PC-3 (cell line): ENCODE measurements at regions of chr3 and their contacts with region 1.

Region 1: GRCh38 chr3:98039322-98040024 is 4.4 kb upstream of the GABRR3 start:
- DNase-seq: peak; percentile 89
- ATAC-seq: peak; percentile 89
- H3K4me3 ChIP-seq: peak overlapping the region; percentile 61
- H3K27ac ChIP-seq: no peak overlapping the region
- H3K4me1 ChIP-seq: no peaks in the 10 kb centered on the region
- H3K27me3 ChIP-seq: peaks cover 16% of the 10 kb centered on the region
- CTCF ChIP-seq: peak; percentile 98

Region 2: DNA sequence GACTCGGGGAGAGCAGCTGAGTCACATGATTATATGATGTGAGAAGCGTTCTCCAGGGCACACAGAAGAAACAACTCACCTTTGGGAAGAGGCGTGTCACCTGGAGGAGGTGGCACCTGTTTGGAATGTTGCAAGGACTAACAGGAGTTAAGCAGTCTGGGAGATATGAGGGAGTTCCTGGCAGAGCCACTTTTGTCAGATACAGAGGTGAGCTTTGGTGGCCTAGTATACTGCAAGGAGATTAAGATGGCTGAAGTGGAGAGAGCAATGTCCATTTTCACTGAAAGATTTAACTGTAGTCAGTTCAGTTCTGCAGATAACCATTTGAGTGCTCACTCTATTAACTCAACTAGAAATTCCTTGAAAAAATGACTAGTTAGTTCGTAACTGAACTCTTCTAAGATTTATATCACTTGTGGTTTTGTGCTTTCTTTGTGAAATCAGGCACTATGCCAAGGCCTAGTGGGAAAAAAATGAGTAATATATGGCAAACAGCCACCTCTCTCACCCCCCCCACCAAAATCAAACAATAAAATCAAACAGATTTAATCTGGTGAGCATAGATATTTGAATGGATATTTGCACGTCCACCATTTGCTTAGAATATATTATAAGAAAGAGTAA is 156.4 kb before region 1 on chr3:
- CTCF ChIA-PET with region 1: no interaction called
- POLR2A ChIA-PET with region 1: no interaction called
- intact Hi-C with region 1: no loop called
- DNase-seq: peak; percentile 92
- ATAC-seq: peak; percentile 92
- H3K4me3 ChIP-seq: peak overlapping the region; percentile 54
- H3K27ac ChIP-seq: peak overlapping the region; percentile 90
- H3K4me1 ChIP-seq: peaks cover 26% of the 10 kb centered on the region
- H3K27me3 ChIP-seq: no peaks in the 10 kb centered on the region
- CTCF ChIP-seq: no peak

Region 3: GRCh38 chr3:97971677-97972567 is 67.6 kb before region 1 on chr3 and contains the start of gene RIOX2:
- CTCF ChIA-PET with region 1: no interaction called
- POLR2A ChIA-PET with region 1: no interaction called
- intact Hi-C with region 1: no loop called
- DNase-seq: peak; percentile 82
- ATAC-seq: peak; percentile 88
- H3K4me3 ChIP-seq: peak within 1 kb of the TSS; percentile 75
- H3K27ac ChIP-seq: peak within 1 kb of the TSS; percentile 40
- H3K4me1 ChIP-seq: peaks cover 22% of the 10 kb centered on the region
- H3K27me3 ChIP-seq: no peaks in the 10 kb centered on the region
- CTCF ChIP-seq: no peak
- total RNA-seq, gene RIOX2: 31.0 and 46.4 TPM in 2 replicates

Region 4: DNA sequence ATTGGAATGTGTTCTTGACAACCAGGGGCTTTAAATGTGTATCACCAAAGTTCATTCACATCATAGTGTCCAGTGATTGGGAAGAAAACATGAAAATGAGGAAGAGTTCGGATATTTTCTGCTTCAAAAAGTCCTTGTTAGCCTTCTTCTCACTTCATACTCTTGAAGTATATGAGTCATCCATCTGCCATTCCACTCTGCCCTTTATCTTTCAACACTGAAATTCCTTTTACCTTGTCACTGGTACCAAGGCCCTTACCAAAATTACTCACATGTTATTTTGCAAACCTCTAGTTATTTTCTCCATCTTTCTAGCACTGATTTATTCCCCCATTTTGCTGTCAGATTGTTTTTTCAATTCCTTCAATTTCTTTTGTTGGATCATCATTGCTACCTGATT is 159.5 kb after region 1 on chr3:
- CTCF ChIA-PET with region 1: no interaction called
- POLR2A ChIA-PET with region 1: no interaction called
- intact Hi-C with region 1: no loop called
- DNase-seq: peak; percentile 7
- ATAC-seq: no peak
- H3K4me3 ChIP-seq: no peak overlapping the region
- H3K27ac ChIP-seq: no peak overlapping the region
- H3K4me1 ChIP-seq: no peaks in the 10 kb centered on the region
- H3K27me3 ChIP-seq: peaks cover 16% of the 10 kb centered on the region
- CTCF ChIP-seq: no peak

Region 5: DNA sequence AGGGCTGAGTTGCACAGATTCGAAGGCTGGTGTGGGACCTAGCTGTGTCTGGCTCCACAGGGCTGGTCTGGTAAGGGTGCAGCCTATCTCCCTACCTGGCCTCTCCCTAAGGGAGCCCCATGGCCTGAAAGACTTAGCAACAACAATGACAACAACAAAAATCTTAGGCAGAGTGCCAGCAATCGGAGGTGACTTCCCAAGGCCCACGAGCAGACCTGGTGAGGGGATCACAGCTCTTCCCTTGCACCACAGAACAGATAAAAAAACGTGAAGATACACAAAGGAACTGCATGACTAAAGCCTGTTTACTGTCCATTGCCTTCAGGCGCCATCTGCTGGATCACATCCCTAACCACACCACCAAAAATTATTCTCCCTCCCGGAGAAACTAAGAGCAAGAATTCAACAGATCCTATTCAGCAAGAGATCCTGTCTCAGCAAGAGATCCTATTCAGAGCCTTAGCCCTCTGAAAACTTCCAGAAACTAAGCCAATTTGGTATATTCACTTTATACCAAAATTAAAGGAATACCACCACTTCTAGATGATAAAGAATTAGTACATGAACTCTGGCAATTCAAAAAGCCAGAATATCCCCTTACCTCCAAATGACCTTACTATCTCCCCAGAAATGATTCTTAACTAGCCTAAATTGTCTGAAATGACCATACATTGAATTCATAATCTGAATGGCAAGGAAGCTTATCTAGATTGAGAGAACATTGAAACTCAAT is 290.1 kb after region 1 on chr3:
- CTCF ChIA-PET with region 1: interaction called, 4 read pairs
- POLR2A ChIA-PET with region 1: no interaction called
- intact Hi-C with region 1: loop called (anchors 1 kb)
- DNase-seq: peak; percentile 73
- ATAC-seq: peak; percentile 78
- H3K4me3 ChIP-seq: no peak overlapping the region
- H3K27ac ChIP-seq: no peak overlapping the region
- H3K4me1 ChIP-seq: 0 out of 2 replicates have a peak, but pooled peaks cover 4% of the 10 kb centered on the region
- H3K27me3 ChIP-seq: peaks cover 42% of the 10 kb centered on the region
- CTCF ChIP-seq: peak; percentile 87

Region 6: GRCh38 chr3:98522244-98523090 is 483.0 kb after region 1 on chr3 and contains the start of gene CLDND1:
- CTCF ChIA-PET with region 1: no interaction called
- POLR2A ChIA-PET with region 1: no interaction called
- intact Hi-C with region 1: loop called (anchors 2 kb)
- DNase-seq: peak; percentile 99
- ATAC-seq: peak; percentile 95
- H3K4me3 ChIP-seq: peak within 1 kb of the TSS; percentile 79
- H3K27ac ChIP-seq: peak within 1 kb of the TSS; percentile 91
- H3K4me1 ChIP-seq: peaks cover 21% of the 10 kb centered on the region
- H3K27me3 ChIP-seq: no peaks in the 10 kb centered on the region
- CTCF ChIP-seq: no peak
- total RNA-seq, gene CLDND1: 76.4 and 81.1 TPM in 2 replicates

Region 7: DNA sequence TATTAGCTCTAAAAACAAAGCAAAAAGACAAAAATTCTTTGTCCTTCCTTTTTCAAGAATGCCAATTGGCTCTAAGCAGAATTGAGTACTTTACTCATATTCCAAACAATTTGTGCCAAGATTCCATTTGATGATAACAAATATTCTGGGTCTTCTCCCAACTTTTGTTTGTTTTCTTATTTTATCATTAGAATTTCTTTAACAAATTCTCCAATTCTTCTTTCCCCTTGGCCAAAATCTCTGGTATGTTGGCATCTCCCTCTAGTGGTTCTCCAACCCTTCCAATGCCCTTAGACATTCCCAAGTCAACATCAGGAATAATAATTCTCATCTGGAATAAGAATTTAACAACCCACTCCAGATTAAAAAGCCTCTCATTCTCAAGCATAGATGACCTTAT is 548.6 kb after region 1 on chr3:
- CTCF ChIA-PET with region 1: no interaction called
- POLR2A ChIA-PET with region 1: no interaction called
- intact Hi-C with region 1: loop called (anchors 1 kb)
- DNase-seq: peak; percentile 36
- ATAC-seq: no peak
- H3K4me3 ChIP-seq: no peak overlapping the region
- H3K27ac ChIP-seq: no peak overlapping the region
- H3K4me1 ChIP-seq: peaks cover 12% of the 10 kb centered on the region
- H3K27me3 ChIP-seq: no peaks in the 10 kb centered on the region
- CTCF ChIP-seq: peak; percentile 68

Region 8: DNA sequence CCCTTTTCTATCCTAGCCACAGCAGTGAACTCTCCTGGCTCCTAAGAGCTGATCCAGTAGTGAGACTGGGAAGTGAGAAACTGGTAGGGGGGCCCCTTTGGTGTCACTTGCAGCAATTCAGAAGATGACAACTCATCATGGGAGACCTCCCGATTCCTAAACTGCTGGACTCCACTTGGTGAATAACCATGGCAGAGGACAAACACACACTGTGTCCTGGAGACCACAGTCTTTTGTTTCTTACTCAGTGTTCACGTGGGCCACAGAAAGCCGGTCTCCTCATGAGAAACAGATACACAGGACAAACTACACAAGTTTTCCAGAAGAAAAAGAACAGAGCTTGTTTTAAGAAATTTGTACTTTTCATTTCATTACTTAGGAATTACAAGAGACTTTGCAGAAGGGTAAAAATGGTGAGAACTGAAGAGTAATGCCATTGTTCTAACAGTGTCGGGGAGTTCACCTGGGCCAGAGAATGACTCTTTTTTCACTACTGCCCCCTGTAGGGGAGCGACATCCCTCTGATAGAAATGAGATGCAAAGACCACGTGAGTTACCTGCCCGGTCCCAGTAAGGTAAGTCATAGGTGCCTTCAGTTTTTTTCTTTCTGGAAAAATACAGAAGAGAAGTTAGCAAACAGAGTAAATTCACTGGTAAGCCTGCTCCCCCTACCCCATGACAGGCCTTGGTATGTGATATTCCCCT is 761.7 kb after region 1 on chr3:
- CTCF ChIA-PET with region 1: no interaction called
- POLR2A ChIA-PET with region 1: no interaction called
- intact Hi-C with region 1: loop called (anchors 5 kb)
- DNase-seq: no peak
- ATAC-seq: peak; percentile 40; the same call in 1 of the 2 replicates
- H3K4me3 ChIP-seq: no peak overlapping the region
- H3K27ac ChIP-seq: no peak overlapping the region
- H3K4me1 ChIP-seq: no peaks in the 10 kb centered on the region
- H3K27me3 ChIP-seq: no peaks in the 10 kb centered on the region
- CTCF ChIP-seq: peak; percentile 53